Activated T-helper 2 cell treated with anti-CD3 and anti-CD28 coated beads, Interferon-gamma antibody, Interleukin-2, Interleukin-4, amounts not matched to agents 10 μg/mL and 5 μg/mL and 100 μg/mL, durations not matched to agents 14 hours and 24 hours and 36 hours (primary cell): ENCODE measurements at regions of chr10 and their contacts with region 1.

Region 1: DNA sequence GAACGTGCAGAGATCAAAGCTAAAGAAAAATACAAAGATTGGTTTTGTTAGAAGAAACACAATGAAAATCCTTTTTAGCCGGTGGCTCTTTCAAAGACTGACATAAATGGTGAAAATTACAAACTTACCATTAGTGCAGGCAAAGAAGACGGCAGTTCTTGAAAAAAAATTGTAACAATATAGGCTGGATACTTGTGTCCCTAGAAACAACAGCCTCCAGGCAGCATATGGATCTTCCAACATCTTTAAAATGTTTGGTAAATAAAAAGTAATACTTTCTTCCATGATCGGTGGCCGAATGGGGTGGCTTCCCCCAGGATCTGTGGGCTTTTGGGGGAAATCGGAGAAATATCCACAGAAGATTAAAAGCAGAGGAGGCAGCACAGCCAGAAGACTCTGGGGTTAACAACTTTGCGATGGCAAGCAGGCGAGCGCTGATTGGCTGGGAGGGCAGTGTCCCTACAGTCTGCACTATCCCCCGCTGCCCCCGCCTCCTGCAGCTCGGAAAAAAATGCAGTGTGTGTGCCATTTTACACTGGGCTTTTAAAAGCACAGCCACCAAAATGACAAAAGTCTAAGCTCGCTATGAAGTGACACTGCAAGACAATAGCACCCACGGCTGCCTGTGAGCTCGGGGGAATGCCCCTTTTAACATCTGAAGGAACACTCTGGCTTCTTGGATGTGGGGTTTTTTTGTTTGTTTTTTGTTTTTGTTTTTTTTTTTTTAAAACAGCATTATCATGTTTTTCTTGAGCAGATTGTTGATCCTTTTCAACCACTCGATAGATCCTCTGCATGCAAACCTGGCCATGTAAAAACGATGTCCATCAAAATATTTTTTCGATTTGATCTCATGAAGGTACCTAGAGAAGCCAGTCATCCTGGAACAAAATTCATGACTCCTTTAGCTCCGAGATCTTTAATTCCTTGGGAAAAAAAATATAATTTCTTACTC is 31.7 kb upstream of the EPC1 start:
- DNase-seq: peak; percentile 88
- H3K4me3 Mint-ChIP-seq: no peak overlapping the region
- H3K27ac Mint-ChIP-seq: no peak overlapping the region
- H3K4me1 Mint-ChIP-seq: peaks cover 20% of the 10 kb centered on the region
- H3K27me3 Mint-ChIP-seq: no peaks in the 10 kb centered on the region

Region 2: GRCh38 chr10:32055813-32056600 is 322.6 kb before region 1 on chr10 and contains the start of gene KIF5B:
- intact Hi-C with region 1: loop called (anchors 2 kb)
- DNase-seq: peak; percentile 85
- H3K4me3 Mint-ChIP-seq: peak within 1 kb of the TSS; percentile 88
- H3K27ac Mint-ChIP-seq: peak within 1 kb of the TSS; percentile 90
- H3K4me1 Mint-ChIP-seq: peaks cover 36% of the 10 kb centered on the region
- H3K27me3 Mint-ChIP-seq: no peaks in the 10 kb centered on the region
- total RNA-seq, gene KIF5B: 76.6 and 79.0 TPM in 2 replicates

Region 3: GRCh38 chr10:32367793-32368453 is 10.7 kb before region 1 on chr10:
- intact Hi-C with region 1: loop called (anchors 1 kb)
- DNase-seq: peak; percentile 58
- H3K4me3 Mint-ChIP-seq: no peak overlapping the region
- H3K27ac Mint-ChIP-seq: no peak overlapping the region
- H3K4me1 Mint-ChIP-seq: peaks cover 22% of the 10 kb centered on the region
- H3K27me3 Mint-ChIP-seq: no peaks in the 10 kb centered on the region

Region 4: DNA sequence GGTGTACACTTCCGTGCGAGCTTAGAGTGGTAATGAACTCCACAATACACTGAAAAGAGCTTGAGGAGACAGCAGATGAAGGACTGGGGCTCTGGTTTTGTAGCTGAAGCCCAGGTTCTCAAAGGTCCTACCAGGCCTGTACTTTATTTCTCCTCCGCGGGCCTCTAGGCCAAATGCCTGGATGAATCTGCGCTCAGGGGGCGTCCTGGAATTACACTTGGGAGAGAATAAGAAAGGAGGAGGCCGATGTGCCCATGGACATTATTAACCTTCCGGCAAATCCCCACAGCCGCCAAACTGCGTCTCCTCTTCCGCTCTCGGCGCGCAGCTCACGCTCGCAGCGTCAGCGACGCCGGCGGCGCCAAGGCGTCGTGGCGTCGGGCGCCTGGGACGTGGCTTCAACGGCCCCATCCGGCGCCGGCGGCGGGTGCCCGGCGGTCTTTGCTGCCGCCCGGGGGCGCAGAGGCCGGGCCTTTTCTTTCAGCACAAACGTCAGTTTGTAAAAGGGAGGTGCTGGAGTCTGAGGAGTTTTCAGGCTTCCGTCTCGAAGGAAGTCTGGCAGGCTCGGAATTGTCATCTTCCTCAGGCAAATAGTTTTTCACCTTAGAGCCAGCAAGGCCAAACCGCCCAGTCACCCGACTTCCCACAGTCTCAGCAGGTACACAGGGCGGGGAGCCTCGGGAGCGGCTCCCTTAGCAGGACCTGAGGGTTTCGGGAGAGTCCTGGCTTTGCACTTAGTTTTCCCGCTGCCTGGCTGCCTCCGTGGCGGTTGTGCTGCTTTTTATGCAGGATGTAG is 67.3 kb after region 1 on chr10 and contains the start of gene CCDC7:
- intact Hi-C with region 1: loop called (anchors 1 kb)
- DNase-seq: peak; percentile 82
- H3K4me3 Mint-ChIP-seq: peak within 1 kb of the TSS; percentile 90
- H3K27ac Mint-ChIP-seq: peak within 1 kb of the TSS; percentile 94
- H3K4me1 Mint-ChIP-seq: peaks cover 10% of the 10 kb centered on the region
- H3K27me3 Mint-ChIP-seq: peaks cover 2% of the 10 kb centered on the region
- total RNA-seq, gene CCDC7: 12.2 and 14.0 TPM in 2 replicates

Region 5: DNA sequence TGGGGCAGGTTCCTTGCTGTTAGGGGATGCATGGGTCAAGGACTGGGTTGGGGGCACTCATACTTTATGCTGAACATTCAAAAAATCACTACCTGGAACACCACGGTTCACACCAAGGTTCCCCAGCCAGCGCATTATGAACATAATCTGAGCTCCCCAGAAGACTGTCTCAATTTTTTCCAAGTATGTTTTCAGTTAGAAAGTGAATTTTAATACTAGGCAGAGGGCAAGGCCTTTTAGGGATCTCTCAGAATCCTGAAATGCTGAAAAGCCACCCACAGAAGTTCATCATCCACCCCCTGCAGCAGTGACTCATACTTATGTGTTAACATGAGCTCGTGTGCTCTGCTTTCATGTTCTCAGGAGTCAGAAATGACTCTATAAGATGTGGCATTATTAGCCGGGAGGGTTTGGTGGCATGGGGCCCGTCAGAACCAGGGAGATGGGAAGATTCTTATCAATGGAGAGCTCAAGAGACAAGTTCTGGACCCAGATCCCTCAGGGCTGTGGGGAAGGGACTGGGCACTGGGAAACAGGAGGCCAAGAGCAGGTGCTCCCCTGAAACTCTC is 764.6 kb after region 1 on chr10:
- intact Hi-C with region 1: loop called (anchors 5 kb)
- DNase-seq: no peak
- H3K4me3 Mint-ChIP-seq: no peak overlapping the region
- H3K27ac Mint-ChIP-seq: peak overlapping the region; percentile 76
- H3K4me1 Mint-ChIP-seq: peaks cover 40% of the 10 kb centered on the region
- H3K27me3 Mint-ChIP-seq: no peaks in the 10 kb centered on the region